ENCODE measurements at regions of chr18 and their contacts with region 1.

Region 1: DNA sequence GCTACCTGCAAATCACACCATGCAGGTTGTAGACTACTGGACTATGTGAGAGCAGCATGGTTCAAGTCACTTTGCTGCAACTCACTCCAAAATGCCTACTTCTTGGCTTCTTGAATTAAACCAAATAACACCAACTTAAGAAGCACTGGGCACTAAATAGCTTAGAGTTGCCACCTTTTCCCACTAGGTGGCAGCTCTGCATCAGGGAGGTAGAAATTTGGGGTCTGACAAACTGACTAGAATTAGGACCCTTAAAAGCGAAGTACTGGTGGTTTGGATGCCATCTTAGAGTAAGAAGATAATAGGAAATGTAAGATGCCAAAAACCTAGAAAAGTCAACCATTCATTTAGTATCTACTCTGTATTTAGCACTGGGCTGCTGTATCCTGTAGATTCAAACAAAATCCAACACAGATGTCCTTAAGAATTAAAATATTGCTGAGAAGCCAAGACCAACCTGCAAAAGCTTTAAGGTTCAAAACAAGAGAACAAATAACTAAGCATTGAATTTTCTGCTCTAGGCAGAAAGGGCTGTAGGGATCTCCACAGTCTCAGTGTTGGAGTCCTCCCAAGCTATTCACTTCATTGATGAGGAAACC is 65.5 kb downstream of the CCBE1 start:
- DNase-seq: peak; percentile 59
- ATAC-seq: peak; percentile 54; the same call in 1 of the 2 replicates
- H3K4me3 ChIP-seq: no peak overlapping the region
- H3K27ac ChIP-seq: no peak overlapping the region
- H3K4me1 ChIP-seq: no peaks in the 10 kb centered on the region
- H3K27me3 ChIP-seq: no peaks in the 10 kb centered on the region
- CTCF ChIP-seq: peak; percentile 97

Region 2: DNA sequence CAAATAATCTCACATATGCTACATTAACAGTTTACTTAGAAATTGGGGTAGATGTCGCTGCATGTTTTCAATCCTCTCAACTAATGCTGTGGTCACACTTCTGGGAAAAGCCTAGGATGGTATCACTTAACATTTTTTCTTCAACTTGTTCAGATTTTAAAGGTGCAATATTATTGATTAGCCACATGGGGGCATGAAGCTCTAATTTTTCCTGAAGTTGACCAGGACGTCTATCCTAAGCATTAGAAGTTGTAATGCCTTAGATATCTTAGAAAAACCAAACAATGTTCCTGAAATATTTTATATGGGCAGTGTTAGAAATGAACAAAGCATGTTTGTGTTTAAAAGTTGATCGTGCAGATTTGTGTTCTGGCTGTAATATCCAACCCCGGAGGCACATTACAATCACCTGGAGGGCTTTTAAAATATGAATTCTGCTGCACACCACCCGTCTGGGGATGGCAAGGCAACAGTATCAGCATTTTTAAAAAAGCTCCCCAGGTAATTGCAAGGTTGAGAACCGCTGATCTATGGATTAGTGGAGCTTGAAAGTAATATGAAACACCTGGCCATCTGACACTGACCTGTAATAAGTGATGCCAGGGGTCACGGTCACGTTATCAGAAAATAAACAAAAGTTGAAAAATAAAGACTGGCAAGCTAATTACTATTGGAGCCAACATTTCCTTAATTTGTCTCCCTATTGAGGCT is 172.2 kb before region 1 on chr18:
- CTCF ChIA-PET with region 1: interaction called, 3 read pairs
- POLR2A ChIA-PET with region 1: no interaction called
- intact Hi-C with region 1: loop called (anchors 1 kb)
- DNase-seq: peak; percentile 43
- ATAC-seq: peak; percentile 58
- H3K4me3 ChIP-seq: no peak overlapping the region
- H3K27ac ChIP-seq: no peak overlapping the region
- H3K4me1 ChIP-seq: no peaks in the 10 kb centered on the region
- H3K27me3 ChIP-seq: no peaks in the 10 kb centered on the region
- CTCF ChIP-seq: peak; percentile 77

Region 3: GRCh38 chr18:59823596-59824195 is 192.0 kb after region 1 on chr18:
- CTCF ChIA-PET with region 1: interaction called, 42 read pairs
- POLR2A ChIA-PET with region 1: no interaction called
- intact Hi-C with region 1: loop called (anchors 1 kb)
- DNase-seq: peak; percentile 92
- ATAC-seq: peak; percentile 92
- H3K4me3 ChIP-seq: no peak overlapping the region
- H3K27ac ChIP-seq: no peak overlapping the region
- H3K4me1 ChIP-seq: peaks cover 4% of the 10 kb centered on the region
- H3K27me3 ChIP-seq: no peaks in the 10 kb centered on the region
- CTCF ChIP-seq: peak; percentile 92

Region 4: GRCh38 chr18:60163622-60164021 is 531.9 kb after region 1 on chr18:
- CTCF ChIA-PET with region 1: no interaction called
- POLR2A ChIA-PET with region 1: no interaction called
- intact Hi-C with region 1: no loop called
- DNase-seq: no peak
- ATAC-seq: no peak
- H3K4me3 ChIP-seq: no peak overlapping the region
- H3K27ac ChIP-seq: no peak overlapping the region
- H3K4me1 ChIP-seq: peaks cover 4% of the 10 kb centered on the region; the same call in 1 of the 2 replicates
- H3K27me3 ChIP-seq: no peaks in the 10 kb centered on the region
- CTCF ChIP-seq: no peak

Measured in PC-3 (cell line).